ENCODE measurements at regions of chr14 and their contacts with region 1.

Region 1: DNA sequence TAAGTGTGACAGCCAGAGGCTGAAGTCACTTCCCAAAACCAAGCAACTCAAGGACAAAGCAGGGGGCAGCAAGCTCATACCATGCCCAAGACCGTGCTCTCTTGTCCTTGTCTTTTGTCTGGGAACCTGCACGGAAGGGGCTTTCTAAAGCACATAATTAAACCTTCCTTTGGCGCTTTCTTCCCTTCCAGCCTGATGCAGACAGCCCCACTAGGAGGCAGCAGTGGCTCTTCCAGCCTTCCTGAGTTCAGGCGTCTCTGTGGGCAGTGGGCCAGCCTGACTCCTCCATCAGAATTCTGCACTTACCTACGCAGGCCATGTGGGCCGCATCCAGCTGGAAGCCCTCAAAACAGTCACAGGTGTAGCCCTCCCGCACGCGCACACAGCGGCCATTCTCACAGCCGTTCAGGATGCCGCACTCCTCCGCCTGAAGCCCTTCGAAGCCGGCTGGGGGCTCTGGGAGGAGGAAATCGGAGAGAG is 7.6 kb downstream of the ISCA2 start:
- DNase-seq: peak; percentile 72 to 83
- H3K4me3 ChIP-seq: no peak overlapping the region
- H3K27ac ChIP-seq: peak overlapping the region; percentile 2 to 16
- H3K4me1 ChIP-seq: no peaks in the 10 kb centered on the region
- H3K27me3 ChIP-seq: no peaks in the 10 kb centered on the region
- CTCF ChIP-seq: peak; percentile 65 to 68

Region 2: DNA sequence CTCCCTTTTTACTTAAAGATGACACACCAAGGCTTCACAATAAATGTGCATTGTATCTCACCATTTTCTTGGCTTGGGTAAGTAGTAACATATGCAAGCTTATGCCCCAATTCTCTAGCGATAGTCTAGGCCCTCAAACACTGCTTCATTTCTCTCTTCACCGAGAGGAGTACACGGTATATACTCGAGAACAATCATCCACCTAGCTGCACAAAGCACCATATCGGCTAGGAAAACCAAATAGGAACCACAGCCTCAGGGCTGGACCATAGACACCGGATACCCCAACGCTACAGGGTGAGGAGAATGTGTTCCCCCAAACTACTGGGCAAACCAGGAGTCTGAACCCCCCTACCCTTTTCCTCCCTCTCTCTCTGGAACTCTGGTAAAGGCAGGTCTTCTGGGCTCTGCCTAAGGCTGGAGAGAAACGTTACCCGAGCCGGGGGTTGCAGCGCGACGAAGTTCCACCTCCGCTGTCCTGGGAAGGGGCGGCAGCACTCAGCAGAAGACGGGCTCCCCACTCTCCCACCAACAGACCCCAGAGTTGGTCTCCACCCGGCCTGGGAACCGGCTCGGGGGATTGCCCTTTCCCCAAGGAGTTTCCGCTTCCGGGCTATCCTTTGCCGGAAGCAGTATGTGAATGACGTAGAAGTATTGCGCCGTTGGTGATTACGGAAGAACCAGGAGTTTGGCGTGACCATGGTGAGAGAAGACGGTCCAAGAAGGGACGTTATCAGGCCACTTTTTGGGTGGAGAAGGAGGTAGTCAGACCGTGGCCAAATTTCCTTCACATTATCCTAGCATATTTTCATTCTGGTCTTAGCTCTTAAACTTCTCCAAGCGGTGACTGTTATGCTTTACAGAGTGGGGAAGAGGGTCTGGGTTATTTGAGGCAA is 211.6 kb after region 1 on chr14 and contains the starts of genes AREL1 and FCF1:
- intact Hi-C with region 1: loop called (anchors 5 kb)
- DNase-seq: peak; percentile 84 to 89
- H3K4me3 ChIP-seq: peak within 1 kb of the TSS; percentile 80 to 88
- H3K27ac ChIP-seq: peak within 1 kb of the TSS; percentile 81 to 88
- H3K4me1 ChIP-seq: peaks cover 0 to 36% (median 24%) of the 10 kb centered on the region in 4 donors
- H3K27me3 ChIP-seq: no peaks in the 10 kb centered on the region
- CTCF ChIP-seq: no peak

Region 3: GRCh38 chr14:74793506-74794168 is 292.5 kb after region 1 on chr14:
- intact Hi-C with region 1: loop called (anchors 10 kb)
- DNase-seq: no peak
- H3K4me3 ChIP-seq: peak overlapping the region in 1 of 2 donors; percentile 4
- H3K27ac ChIP-seq: peak overlapping the region in 1 of 2 donors; percentile 28
- H3K4me1 ChIP-seq: peaks cover 0 to 22% (median 10%) of the 10 kb centered on the region in 4 donors
- H3K27me3 ChIP-seq: no peaks in the 10 kb centered on the region
- CTCF ChIP-seq: peak; percentile 39